ENCODE measurements at regions of chr15 and their contacts with region 1.

Region 1: GRCh38 chr15:31985607-31986006 is 44.7 kb upstream of the CHRNA7 start:
- DNase-seq: no peak
- H3K4me3 ChIP-seq: no peak overlapping the region
- H3K27ac ChIP-seq: no peak overlapping the region
- H3K4me1 ChIP-seq: no peaks in the 10 kb centered on the region
- H3K27me3 ChIP-seq: no peaks in the 10 kb centered on the region
- CTCF ChIP-seq: no peak

Region 2: DNA sequence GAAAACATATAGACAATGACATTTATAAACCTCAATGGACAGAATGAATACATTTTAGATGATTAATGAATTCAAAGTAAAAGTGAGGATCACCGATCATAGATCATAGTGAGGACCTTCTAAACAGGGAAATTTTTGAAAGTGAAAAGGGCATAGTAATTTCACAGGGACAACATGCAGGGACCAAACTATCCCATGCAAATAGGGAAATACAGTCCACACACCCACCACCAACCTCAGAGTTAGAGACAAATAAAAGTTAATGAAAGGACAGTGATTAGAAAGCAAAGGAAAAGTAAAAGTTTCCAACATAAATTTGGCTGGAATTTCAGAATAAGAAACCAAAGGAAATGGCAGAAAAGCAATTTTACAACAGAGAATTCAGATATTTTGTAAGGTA is 29.3 kb after region 1 on chr15:
- intact Hi-C with region 1: no loop called
- DNase-seq: no peak
- H3K4me3 ChIP-seq: no peak overlapping the region
- H3K27ac ChIP-seq: no peak overlapping the region
- H3K4me1 ChIP-seq: no peaks in the 10 kb centered on the region
- H3K27me3 ChIP-seq: no peaks in the 10 kb centered on the region
- CTCF ChIP-seq: no peak

Region 3: DNA sequence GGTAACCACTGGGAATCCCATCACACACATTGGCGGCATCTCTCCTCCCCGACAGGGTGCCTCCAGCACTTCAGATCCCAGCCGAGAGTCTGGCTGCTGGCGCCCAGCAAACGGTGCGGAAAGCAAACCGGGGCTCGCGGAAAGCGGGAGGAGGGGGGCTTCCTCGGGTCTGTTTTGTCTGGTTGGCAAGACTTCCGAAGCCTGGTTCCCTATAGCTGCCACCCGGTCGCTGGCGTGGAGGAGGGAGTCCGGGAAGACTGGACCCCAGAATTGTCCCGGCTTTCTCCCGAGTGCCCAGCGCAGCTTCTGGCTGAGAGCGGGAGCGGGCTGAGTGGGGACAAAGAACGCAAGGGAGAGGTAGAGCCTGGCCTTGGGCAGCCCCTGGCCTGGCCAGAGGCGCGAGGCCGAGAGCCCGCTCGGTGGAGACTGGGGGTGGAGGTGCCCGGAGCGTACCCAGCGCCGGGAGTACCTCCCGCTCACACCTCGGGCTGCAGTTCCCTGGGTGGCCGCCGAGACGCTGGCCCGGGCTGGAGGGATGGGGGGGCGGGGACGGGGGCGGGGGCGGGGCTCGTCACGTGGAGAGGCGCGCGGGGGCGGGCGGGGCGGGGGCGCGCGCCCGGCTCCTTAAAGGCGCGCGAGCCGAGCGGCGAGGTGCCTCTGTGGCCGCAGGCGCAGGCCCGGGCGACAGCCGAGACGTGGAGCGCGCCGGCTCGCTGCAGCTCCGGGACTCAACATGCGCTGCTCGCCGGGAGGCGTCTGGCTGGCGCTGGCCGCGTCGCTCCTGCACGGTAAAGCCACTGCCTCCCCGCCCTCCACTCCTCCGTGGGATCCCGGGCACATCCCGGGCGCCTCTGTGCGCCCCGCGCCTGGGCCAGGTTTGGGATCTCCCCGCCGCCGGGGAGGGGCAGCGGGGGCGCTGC is 44.5 kb after region 1 on chr15 and contains the start of gene CHRNA7:
- intact Hi-C with region 1: loop called (anchors 5 kb)
- DNase-seq: peak; percentile 70
- H3K4me3 ChIP-seq: peak within 1 kb of the TSS; percentile 75
- H3K27ac ChIP-seq: no peak within 1 kb of the TSS
- H3K4me1 ChIP-seq: no peaks in the 10 kb centered on the region
- H3K27me3 ChIP-seq: peaks cover 10% of the 10 kb centered on the region
- CTCF ChIP-seq: peak; percentile 24
- total RNA-seq, gene CHRNA7: 3.9 to 5.2 TPM